Heart right ventricle (tissue), 16 donors: ENCODE measurements at regions of chr15 and their contacts with region 1.

Region 1: GRCh38 chr15:48242015-48242414 is 35.9 kb downstream of the SLC12A1 start:
- DNase-seq: no peak
- ATAC-seq: no peak
- H3K4me3 ChIP-seq: no peak overlapping the region
- H3K27ac ChIP-seq: no peak overlapping the region
- H3K4me1 ChIP-seq: no peaks in the 10 kb centered on the region
- H3K27me3 ChIP-seq: peaks cover 0 to 15% (median 0%) of the 10 kb centered on the region in 7 donors
- CTCF ChIP-seq: no peak

Region 2: GRCh38 chr15:48170981-48171380 is 71.0 kb before region 1 on chr15:
- intact Hi-C with region 1: no loop called
- DNase-seq: no peak
- ATAC-seq: no peak
- H3K4me3 ChIP-seq: no peak overlapping the region
- H3K27ac ChIP-seq: no peak overlapping the region
- H3K4me1 ChIP-seq: no peaks in the 10 kb centered on the region
- H3K27me3 ChIP-seq: no peaks in the 10 kb centered on the region
- CTCF ChIP-seq: no peak

Region 3: DNA sequence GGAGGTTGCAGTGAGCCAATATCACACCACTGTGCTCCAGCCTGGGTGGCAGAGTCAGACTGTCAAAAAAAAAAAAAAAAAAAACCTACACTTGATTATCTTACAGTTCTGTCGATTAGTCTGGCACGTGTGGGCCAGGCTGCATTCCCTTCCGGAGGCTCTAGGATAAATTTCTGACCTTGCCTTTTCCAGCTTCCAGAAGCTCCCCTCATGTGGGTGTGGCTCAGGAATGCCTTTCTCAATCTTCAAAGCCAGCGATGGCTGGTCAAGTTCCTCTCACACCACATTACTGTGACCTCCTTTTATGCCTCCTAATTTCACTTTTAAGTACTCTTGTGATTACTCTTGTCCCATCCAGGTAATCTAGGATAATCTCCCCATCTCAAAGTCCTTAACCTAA is 31.0 kb after region 1 on chr15:
- intact Hi-C with region 1: loop called in 1 of 10 experiments (anchors 1 kb)
- DNase-seq: no peak
- ATAC-seq: no peak
- H3K4me3 ChIP-seq: no peak overlapping the region
- H3K27ac ChIP-seq: no peak overlapping the region
- H3K4me1 ChIP-seq: no peaks in the 10 kb centered on the region
- H3K27me3 ChIP-seq: peaks cover 0 to 16% (median 5%) of the 10 kb centered on the region in 7 donors
- CTCF ChIP-seq: no peak